Esophagus squamous epithelium (tissue), 5 donors: ENCODE measurements at regions of chr2 and their contacts with region 1.

Region 1: DNA sequence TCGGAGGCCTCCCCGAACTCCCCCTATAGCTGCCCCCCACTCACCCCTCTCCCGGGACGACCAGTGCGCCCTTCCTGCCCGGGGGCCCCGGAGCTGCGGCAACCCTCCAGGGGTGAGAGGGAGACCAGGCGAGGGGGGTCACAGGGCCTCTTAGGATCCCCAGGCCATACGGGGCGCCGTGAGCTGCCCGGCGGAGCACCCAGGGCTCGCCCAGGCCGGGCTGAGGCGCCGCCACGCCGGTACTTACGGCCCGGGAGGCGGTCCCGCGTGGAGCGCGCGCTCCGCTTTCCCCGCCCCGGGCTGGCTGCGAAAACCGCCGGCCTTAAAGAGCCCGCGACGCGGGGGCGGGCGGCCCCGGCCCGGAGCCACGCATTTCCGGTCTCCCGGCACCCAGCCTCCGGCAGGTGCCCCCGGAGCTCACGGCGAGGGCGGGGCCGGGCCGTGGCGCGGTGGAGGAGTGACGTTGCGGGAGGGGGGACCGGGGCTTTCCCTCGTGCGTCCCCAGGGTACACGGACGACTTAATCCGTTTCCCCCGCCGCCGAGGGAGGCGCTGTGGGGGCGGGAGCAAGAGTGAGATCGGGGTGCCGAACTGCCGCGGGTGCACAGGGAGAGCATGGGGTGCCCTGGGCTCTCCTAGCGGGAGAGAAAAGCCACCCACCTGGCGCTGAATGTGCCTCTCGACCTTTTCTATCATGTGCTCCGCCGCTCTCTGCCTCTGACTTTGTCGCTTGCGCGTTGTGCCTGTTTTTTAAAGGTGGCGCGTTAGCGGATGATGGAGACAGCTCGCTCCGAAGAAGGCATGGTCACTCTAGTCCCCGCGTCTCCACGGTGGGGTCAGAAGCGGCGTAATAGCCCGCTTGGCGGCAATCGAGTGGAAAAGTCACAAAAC is at the start of gene METTL21A:
- DNase-seq: peak; percentile 44
- H3K4me3 ChIP-seq: peak within 1 kb of the TSS; percentile 79 to 93 (median 86)
- H3K27ac ChIP-seq: peak within 1 kb of the TSS; percentile 93 to 97 (median 95)
- H3K4me1 ChIP-seq: peaks cover 13 to 44% (median 19%) of the 10 kb centered on the region in 3 donors
- H3K27me3 ChIP-seq: no peaks in the 10 kb centered on the region
- CTCF ChIP-seq: peak in 4 of 6 experiments; percentile 19 to 62 (median 42)
- POLR2A ChIP-seq: peak in 3 of 4 donors; percentile 33 to 82 (median 43)
- total RNA-seq, gene METTL21A: 7.1 to 35.8 (median 10.4) TPM

Region 2: DNA sequence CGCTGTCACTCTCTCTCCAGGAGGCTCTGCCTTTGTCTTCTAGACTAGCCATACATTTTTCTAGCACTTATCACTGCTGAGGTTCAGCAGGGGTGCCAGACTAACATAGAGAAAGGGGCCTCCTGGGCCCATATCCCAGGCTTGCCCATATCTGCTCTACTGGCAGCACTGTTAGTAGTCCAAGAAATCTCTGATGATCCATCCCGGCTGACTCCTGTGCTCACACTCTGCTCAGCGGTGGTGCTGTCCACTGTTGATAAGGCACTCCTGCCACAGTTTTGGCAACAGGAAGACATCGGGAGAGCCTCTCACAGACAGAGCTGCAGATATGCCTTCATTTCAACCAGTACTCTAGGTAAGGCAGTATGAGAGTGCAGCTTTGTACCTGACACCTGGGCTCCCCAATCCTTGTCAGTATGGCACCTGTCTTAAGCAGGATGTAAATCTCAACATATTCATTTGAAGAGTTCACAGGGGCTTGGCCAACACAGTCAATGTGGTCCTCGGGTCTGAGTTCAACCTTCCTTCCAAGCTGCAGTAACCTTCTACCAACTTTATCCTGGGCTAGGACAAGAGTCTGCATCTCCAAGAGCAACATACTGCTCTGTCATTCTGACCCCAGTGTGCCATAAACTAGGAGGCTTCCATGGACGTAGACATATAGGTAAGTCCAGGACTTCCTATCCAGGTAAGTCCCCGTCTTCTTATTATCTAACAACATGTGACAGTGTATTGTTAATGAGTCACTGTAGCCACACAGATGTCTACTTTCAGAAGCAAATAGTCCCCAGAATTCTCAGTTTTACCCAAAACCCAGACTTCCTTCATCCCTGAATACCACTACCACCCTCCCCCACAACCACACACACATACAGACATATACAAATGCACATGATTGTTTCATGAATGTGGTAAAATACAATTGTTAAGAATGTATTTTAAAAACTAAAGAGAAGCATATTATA is 475.7 kb before region 1 on chr2:
- intact Hi-C with region 1: loop called (anchors 10 kb)
- DNase-seq: no peak
- H3K4me3 ChIP-seq: no peak overlapping the region
- H3K27ac ChIP-seq: peak overlapping the region in 3 of 4 donors; percentile 0 to 42 (median 41)
- H3K4me1 ChIP-seq: peaks cover 13 to 91% (median 44%) of the 10 kb centered on the region in 3 donors
- H3K27me3 ChIP-seq: no peaks in the 10 kb centered on the region
- CTCF ChIP-seq: no peak
- POLR2A ChIP-seq: no peak

Region 3: DNA sequence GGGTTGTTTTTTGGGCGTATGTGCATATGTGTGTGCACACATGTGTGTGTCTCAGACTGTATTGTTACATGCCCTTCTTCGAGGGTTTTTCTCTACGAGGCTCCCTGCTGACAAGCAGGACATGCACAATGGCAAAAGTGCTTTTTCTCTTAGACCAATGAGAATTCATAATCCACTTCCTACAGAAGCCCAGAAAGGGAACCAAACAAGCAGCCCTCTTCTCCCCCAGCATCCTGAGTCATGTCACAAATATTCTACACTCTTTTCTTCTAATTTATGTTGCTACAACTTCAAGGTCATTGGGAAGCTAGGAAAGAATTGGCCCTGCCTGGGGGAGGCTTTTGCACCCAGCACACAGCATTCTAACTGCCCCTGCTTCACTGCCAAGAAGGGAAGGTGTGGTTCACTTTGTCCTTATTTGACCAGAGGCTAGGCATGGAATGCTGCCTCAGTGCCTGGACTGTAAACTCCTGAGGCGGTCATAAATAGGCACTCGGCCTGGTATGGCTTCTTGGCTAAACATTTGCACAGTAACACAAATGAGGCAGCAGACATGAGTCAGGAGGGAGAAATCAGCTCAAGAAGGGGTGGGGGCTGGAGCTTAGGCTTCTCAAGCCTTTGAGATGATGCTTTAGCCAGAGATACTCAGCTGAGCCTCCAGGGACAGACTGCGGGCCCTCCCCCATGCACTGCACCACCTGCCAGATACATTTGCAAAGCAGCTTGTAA is 366.8 kb before region 1 on chr2:
- intact Hi-C with region 1: no loop called
- DNase-seq: no peak
- H3K4me3 ChIP-seq: no peak overlapping the region
- H3K27ac ChIP-seq: peak overlapping the region; percentile 25 to 81 (median 74)
- H3K4me1 ChIP-seq: peaks cover 17 to 56% (median 17%) of the 10 kb centered on the region in 3 donors
- H3K27me3 ChIP-seq: no peaks in the 10 kb centered on the region
- CTCF ChIP-seq: peak in 3 of 6 experiments; percentile 5 to 11 (median 5)
- POLR2A ChIP-seq: no peak

Region 4: DNA sequence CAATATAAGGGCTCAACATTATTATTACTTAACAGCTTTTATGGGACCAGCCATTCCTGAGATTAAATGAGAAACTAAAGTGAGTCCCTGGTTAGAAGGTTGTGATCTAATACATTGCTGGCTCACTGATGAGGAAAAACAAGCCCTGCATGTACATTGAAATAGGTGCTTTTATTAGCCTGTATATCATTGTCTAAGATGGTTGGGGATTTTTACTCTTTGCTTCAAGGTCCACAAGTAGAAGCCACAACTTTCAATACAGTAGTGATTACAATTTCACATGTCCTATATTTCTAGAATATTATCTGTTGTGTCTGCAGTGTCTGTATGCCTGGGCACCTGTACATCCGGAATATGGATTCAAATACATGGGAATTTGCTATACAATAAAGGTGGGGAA is 248.5 kb after region 1 on chr2:
- intact Hi-C with region 1: no loop called
- DNase-seq: no peak
- H3K4me3 ChIP-seq: no peak overlapping the region
- H3K27ac ChIP-seq: no peak overlapping the region
- H3K4me1 ChIP-seq: no peaks in the 10 kb centered on the region
- H3K27me3 ChIP-seq: no peaks in the 10 kb centered on the region
- CTCF ChIP-seq: no peak
- POLR2A ChIP-seq: no peak